HCT116 (cell line): ENCODE measurements at regions of chr10 and their contacts with region 1.

Region 1: GRCh38 chr10:26534384-26534783 is 96.2 kb downstream of the APBB1IP start:
- DNase-seq: peak; percentile 37
- ATAC-seq: peak; percentile 93
- H3K4me3 ChIP-seq: no peak overlapping the region
- H3K27ac ChIP-seq: no peak overlapping the region
- H3K4me1 ChIP-seq: peaks cover 0 to 3% of the 10 kb centered on the region in 2 experiments; a peak in 1 of 4 replicates
- H3K27me3 ChIP-seq: no peaks in the 10 kb centered on the region
- CTCF ChIP-seq: peak; percentile 8 to 72 (median 71); a peak in 4 of 6 replicates
- POLR2A ChIP-seq: no peak
- RAD21 ChIP-seq: peak; percentile 25; the same call in 1 of the 2 replicates

Region 2: DNA sequence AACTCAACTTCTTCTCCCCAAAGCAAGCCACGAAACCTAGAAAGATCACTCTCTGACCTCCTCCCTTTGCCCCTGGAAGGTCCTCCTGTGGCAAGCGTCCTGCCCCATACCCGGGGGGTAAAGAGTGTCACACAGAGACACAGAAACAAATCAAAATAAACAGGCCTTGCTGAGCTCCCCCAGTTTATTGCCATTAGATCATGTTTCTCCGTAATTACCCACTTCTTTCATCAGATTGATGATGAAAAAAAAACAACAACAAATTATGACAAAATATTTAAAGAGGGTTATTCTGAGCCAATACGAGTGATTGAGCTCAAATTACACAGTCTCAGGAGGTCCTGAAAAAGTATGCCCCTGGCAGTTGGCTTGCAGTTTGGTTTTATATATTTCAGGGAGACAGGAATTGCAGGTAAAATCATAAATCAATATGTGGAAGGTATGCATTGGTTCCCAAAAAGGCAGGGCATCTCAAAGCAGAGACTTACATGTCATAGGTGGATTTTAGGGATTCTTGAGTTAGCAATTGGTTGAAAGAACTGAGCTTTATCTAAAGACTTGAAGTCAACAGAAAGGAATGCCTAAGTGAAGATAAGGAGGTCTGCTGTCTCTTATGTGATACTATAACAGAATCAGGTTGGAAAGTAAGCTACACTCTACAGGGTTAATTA is 10.1 kb before region 1 on chr10:
- CTCF ChIA-PET with region 1: interaction called, 13 read pairs
- POLR2A ChIA-PET with region 1: no interaction called
- RAD21 ChIA-PET with region 1: no interaction called
- intact Hi-C with region 1: no loop called
- DNase-seq: no peak
- ATAC-seq: no peak
- H3K4me3 ChIP-seq: no peak overlapping the region
- H3K27ac ChIP-seq: no peak overlapping the region
- H3K4me1 ChIP-seq: no peaks in the 10 kb centered on the region
- H3K27me3 ChIP-seq: no peaks in the 10 kb centered on the region
- CTCF ChIP-seq: no peak
- POLR2A ChIP-seq: no peak
- RAD21 ChIP-seq: no peak

Region 3: GRCh38 chr10:26987851-26988337 is 453.5 kb after region 1 on chr10:
- CTCF ChIA-PET with region 1: no interaction called
- POLR2A ChIA-PET with region 1: no interaction called
- RAD21 ChIA-PET with region 1: no interaction called
- intact Hi-C with region 1: no loop called
- DNase-seq: no peak
- ATAC-seq: no peak
- H3K4me3 ChIP-seq: no peak overlapping the region
- H3K27ac ChIP-seq: no peak overlapping the region
- H3K4me1 ChIP-seq: no peaks in the 10 kb centered on the region
- H3K27me3 ChIP-seq: no peaks in the 10 kb centered on the region
- CTCF ChIP-seq: no peak
- POLR2A ChIP-seq: no peak
- RAD21 ChIP-seq: no peak